Esophagus squamous epithelium (tissue), 5 donors: ENCODE measurements at regions of chr1 and their contacts with region 1.

Region 1: DNA sequence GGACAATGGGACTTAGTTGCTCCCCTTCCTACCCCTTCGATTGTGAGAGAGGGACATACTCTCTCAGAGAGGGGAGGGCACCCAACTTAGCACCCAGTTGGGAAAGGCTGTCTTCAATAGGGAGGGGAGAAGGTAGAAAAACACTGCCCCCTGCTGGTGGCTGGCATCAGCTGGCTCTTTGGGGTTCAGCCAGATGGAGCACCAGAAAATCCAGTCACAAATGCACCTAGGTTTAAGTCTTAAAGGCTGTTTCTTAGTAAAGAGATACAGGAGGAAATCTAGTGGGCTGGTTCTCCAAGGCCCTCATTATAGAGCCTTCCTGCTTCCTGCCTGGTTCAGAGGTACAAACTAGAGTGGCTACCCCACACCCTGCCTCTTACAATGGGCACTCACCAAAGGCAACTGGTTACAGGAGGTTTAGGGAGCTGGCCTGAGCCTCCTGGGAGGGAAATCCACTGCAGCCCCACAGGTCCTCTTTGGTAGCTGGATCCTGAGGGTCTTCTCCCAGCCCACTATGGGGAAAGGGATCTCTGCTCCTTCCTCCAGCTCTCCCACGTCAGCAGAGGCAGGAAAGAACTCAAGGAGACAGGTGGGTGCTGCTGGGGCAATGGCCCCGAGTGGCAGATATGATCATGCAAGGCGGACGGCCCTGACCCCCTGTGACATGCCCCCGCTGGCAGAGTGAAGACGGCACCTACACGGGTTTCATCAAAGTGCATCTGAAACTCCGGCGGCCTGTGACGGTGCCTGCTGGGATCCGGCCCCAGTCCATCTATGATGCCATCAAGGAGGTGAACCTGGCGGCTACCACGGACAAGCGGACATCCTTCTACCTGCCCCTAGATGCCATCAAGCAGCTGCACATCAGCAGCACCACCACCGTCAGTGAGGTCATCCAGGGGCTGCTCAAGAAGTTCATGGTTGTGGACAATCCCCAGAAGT is 28.3 kb downstream of the EIF2D start:
- DNase-seq: no peak
- H3K4me3 ChIP-seq: no peak overlapping the region
- H3K27ac ChIP-seq: peak overlapping the region; percentile 85 to 89 (median 88)
- H3K4me1 ChIP-seq: peaks cover 49 to 95% (median 55%) of the 10 kb centered on the region in 3 donors
- H3K27me3 ChIP-seq: no peaks in the 10 kb centered on the region
- CTCF ChIP-seq: peak; percentile 80 to 97 (median 93)
- POLR2A ChIP-seq: no peak

Region 2: GRCh38 chr1:206489980-206490770 is 93.8 kb before region 1 on chr1:
- intact Hi-C with region 1: loop called (anchors 5 kb)
- DNase-seq: no peak
- H3K4me3 ChIP-seq: no peak overlapping the region
- H3K27ac ChIP-seq: no peak overlapping the region
- H3K4me1 ChIP-seq: peaks cover 4 to 24% (median 4%) of the 10 kb centered on the region in 3 donors
- H3K27me3 ChIP-seq: no peaks in the 10 kb centered on the region
- CTCF ChIP-seq: peak; percentile 67 to 95 (median 92)
- POLR2A ChIP-seq: no peak

Region 3: DNA sequence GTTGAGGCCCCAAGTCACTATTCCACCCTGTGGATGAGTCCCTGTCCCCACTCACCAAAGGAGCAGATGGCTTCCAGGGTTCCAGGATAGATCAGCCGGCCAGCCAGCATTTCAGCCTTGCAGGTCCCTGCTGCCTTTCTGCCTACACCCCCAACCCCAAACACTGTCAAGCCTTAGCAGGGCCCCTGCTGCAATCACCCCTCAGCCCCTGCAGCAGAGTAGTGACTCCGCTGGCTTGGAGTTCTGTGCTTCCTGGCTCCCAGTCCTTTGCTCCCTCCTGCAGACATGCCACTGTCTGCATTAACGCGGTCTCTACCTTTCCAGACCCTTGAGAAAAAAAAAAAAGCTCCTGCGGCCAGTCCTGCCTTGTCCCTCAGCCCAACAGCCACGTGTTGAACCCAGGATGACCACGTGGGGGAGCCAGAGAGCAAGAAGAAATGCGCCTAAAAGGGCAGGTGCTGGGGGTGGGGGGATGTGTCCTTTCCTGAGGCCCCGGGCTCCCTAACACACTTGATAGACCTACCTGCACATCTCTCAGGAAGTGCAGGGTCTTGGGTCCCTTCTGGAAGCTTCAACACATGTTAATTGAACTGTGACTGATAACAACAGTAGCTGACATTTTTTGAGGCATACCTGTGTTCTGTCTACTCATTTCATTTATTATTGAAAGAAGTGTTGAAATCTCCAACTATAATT is 39.3 kb before region 1 on chr1:
- intact Hi-C with region 1: loop called (anchors 5 kb)
- DNase-seq: no peak
- H3K4me3 ChIP-seq: no peak overlapping the region
- H3K27ac ChIP-seq: no peak overlapping the region
- H3K4me1 ChIP-seq: peaks cover 9 to 39% (median 15%) of the 10 kb centered on the region in 3 donors
- H3K27me3 ChIP-seq: no peaks in the 10 kb centered on the region
- CTCF ChIP-seq: peak; percentile 68 to 86 (median 73)
- POLR2A ChIP-seq: no peak